SK-N-SH (cell line): ENCODE measurements at regions of chr20 and their contacts with region 1.

Region 1: GRCh38 chr20:9978397-9979004 is 56.3 kb upstream of the ANKEF1 start:
- DNase-seq: peak; percentile 66
- H3K4me3 ChIP-seq: peak overlapping the region; percentile 6 to 16; a peak in 2 of 4 replicates
- H3K27ac ChIP-seq: no peak overlapping the region; a peak in 1 of 4 replicates
- H3K4me1 ChIP-seq: no peaks in the 10 kb centered on the region; a peak in 1 of 4 replicates
- H3K27me3 ChIP-seq: no peaks in the 10 kb centered on the region
- CTCF ChIP-seq: peak; percentile 94
- EP300 ChIP-seq: no peak
- RAD21 ChIP-seq: peak; percentile 99

Region 2: DNA sequence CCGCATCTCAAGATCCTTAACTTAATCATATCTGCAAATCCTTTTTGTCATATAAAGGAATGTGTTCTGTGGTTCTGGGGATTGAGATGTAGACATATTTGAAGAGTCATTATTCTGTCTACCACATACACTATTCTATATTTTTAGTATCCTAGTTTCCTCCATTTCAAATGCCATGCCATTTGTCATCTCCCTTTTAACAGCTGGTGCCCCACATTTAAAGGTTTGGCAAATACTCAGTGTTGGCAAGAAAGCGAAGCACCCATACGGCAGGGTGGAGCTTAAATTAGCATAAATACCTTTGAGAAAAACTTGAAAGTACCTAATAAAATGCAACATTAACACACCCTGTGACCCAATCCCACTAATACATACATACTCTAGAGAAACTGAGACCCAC is 171.4 kb before region 1 on chr20:
- CTCF ChIA-PET with region 1: no interaction called
- POLR2A ChIA-PET with region 1: no interaction called
- DNase-seq: no peak
- H3K4me3 ChIP-seq: no peak overlapping the region
- H3K27ac ChIP-seq: no peak overlapping the region
- H3K4me1 ChIP-seq: no peaks in the 10 kb centered on the region
- H3K27me3 ChIP-seq: no peaks in the 10 kb centered on the region
- CTCF ChIP-seq: no peak
- EP300 ChIP-seq: no peak
- RAD21 ChIP-seq: no peak

Region 3: DNA sequence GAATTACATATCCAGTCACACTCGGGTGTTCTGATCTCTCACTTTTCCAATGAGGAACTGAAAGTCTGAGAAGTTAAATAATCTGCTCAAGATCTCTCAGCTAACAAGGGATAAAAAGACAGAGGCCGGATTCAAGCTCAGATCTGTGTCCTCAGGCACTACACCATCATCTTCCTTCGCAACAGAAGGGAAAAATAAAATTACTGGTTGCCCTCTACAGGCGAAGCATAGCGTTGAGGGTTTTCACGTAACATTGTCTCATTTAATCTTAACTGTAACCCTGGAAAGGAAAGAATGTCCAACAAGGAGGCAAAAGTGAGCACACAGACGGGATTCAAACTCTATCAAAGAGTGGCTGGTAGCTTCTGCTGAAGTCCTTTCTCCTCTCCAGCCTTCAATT is 11.5 kb before region 1 on chr20:
- CTCF ChIA-PET with region 1: interaction called, 36 read pairs
- POLR2A ChIA-PET with region 1: no interaction called
- DNase-seq: peak; percentile 30
- H3K4me3 ChIP-seq: no peak overlapping the region
- H3K27ac ChIP-seq: no peak overlapping the region
- H3K4me1 ChIP-seq: peaks cover 0 to 6% of the 10 kb centered on the region in 2 experiments; a peak in 1 of 4 replicates
- H3K27me3 ChIP-seq: no peaks in the 10 kb centered on the region; the same call in 1 of the 2 replicates
- CTCF ChIP-seq: peak; percentile 41
- EP300 ChIP-seq: no peak
- RAD21 ChIP-seq: peak; percentile 28

Region 4: DNA sequence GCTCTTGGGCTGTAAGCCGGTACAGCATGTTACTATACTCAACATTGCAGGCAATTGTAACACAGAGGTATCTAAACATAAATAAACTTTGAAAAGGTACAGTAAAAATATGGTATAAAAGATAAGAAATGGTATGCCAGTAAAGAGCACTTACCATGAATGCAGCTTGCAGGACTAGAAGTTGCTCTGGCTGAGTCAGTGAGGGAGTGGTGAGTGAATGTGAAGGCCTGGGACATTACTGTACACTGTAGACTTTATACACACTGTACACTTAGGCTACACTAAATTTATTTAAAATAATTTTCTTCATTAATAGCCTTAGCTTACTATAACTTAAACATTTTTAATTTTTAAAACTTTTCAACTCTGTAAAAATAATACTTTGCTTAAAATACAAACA is 18.4 kb after region 1 on chr20:
- CTCF ChIA-PET with region 1: interaction called, 14 read pairs
- POLR2A ChIA-PET with region 1: no interaction called
- DNase-seq: no peak
- H3K4me3 ChIP-seq: no peak overlapping the region
- H3K27ac ChIP-seq: no peak overlapping the region
- H3K4me1 ChIP-seq: no peaks in the 10 kb centered on the region; a peak in 1 of 4 replicates
- H3K27me3 ChIP-seq: no peaks in the 10 kb centered on the region
- CTCF ChIP-seq: no peak
- EP300 ChIP-seq: no peak
- RAD21 ChIP-seq: no peak

Region 5: GRCh38 chr20:10219452-10219791 is 240.9 kb after region 1 on chr20:
- CTCF ChIA-PET with region 1: interaction called, 20 read pairs
- POLR2A ChIA-PET with region 1: no interaction called
- DNase-seq: peak; percentile 84
- H3K4me3 ChIP-seq: peak overlapping the region; percentile 68 to 69
- H3K27ac ChIP-seq: peak overlapping the region; percentile 48 to 87; a peak in 3 of 4 replicates
- H3K4me1 ChIP-seq: peaks cover 0 to 20% of the 10 kb centered on the region in 2 experiments; a peak in 2 of 4 replicates
- H3K27me3 ChIP-seq: no peaks in the 10 kb centered on the region
- CTCF ChIP-seq: peak; percentile 16; the same call in 1 of the 2 replicates
- EP300 ChIP-seq: peak in 1 of 2 experiments; percentile 49; a peak in 1 of 4 replicates
- RAD21 ChIP-seq: no peak

Region 6: DNA sequence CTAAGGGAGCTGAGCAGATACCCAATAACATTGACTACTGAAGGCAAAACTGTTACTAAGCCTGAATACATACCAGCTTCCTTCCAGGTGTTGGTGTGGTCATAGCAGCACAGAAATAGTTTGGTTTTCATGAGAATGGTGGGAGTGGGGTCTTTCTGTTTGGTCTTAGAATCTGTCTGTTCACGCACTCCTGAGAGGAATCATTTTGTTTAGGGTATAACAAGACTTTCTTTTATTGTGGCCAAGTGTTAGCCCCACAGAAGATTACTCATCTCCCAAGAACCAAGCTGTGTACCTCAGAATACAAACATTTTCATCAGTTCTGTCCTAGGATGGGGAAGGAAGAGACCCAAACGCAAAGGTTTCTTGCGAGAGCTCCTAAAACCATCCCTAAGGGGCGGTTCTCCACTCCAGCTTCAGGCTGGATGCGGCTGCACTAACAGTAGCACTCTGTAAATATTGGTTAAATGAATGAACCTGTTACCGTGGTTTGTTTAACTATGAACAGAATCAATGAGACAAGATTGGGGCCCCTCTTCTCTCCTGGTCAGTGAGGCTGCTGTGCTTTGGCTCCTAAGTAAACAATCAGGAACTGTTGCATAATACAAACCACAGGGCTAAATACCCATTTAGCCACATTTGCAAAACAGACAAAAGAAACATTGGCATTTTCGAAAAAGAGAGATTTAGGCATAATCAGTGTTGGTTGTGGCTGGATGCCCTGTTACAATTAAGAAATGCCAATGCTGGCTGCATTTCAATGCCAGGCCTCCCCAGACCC is 285.1 kb after region 1 on chr20:
- CTCF ChIA-PET with region 1: interaction called, 12 read pairs
- POLR2A ChIA-PET with region 1: no interaction called
- DNase-seq: no peak
- H3K4me3 ChIP-seq: no peak overlapping the region
- H3K27ac ChIP-seq: no peak overlapping the region
- H3K4me1 ChIP-seq: no peaks in the 10 kb centered on the region
- H3K27me3 ChIP-seq: no peaks in the 10 kb centered on the region
- CTCF ChIP-seq: no peak
- EP300 ChIP-seq: no peak
- RAD21 ChIP-seq: no peak

Region 7: DNA sequence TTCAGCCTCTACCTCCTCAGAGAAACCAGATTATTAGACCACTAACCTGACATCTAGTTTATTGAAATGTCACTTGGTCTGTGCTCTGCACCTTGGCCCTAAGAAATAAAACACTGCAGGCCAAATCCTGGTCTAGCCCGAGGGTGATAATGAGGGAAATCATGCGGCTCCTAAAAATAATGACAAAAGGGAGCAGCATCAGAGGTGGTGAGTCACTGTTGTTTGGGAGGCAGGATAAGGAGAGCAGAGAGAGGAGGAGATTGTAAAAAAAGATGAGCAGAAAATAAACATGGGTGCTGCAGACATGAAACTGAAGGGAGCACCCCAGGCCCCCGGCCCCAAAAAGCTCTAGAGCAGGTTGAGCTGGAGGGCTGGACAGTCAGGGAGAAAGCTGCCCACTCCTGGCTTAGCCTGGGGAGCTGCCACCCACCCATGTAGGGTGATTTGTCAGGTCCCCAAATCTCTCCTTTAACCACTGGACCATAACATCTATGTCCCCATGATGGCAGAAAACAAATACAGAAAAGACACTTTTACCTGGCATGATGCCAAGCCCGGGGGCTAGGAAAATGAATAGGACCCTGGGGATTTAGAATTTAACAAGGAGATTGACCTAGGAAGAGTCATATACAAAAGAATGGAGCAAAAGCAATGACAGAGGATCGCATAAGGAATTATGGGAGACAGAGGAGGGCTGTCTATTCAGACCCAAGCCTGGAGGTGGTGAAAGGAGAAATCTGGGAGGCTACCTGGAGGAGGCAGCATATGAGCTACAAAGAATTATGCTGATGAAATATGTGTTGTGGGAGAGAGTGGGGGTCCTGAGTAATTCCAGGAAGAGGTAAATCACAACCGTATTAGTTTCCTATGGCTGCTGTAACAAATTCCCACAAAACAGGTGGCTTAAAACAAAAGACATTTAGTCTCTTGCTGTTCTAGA is 343.8 kb after region 1 on chr20:
- CTCF ChIA-PET with region 1: no interaction called
- POLR2A ChIA-PET with region 1: no interaction called
- DNase-seq: peak; percentile 9
- H3K4me3 ChIP-seq: no peak overlapping the region
- H3K27ac ChIP-seq: no peak overlapping the region
- H3K4me1 ChIP-seq: peaks cover 0 to 5% of the 10 kb centered on the region in 2 experiments; a peak in 1 of 4 replicates
- H3K27me3 ChIP-seq: no peaks in the 10 kb centered on the region
- CTCF ChIP-seq: no peak
- EP300 ChIP-seq: no peak
- RAD21 ChIP-seq: no peak

Region 8: DNA sequence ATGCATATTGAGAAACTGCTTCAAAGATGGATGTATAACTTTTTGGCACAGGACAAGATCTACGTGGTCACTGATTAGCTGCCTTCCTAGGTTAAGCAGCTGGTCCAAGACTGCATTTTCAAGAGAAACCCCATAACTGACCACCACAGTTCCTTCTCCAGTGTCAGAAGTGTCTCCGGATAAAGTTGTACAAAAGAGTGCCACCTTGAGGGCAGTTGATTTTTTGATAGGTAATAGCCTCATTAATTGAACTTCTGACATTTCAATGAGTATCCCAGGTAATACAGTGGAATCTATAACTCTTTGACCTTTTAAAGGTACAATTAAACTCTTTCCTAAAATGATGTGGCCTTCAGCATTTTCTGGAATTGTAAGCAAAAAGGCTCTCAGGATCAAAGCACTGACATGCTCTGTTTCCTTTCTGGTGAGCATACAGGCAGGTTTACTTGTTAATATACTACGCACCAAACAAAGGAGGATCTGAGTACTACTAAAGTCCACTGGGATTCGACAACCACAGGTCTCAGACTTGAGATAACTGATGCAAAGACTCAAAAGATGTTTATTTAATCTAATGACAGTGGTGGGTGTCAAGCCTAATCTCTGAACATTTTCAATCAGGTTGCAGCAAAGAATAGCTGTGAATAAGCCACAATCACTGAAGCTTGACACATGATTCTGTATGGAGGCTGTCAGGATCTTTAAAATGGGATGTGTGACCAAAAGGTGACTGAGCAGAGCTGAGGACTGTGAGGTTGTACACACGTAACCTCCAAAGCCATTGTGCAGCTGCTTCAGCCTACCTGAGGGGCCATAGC is 434.3 kb after region 1 on chr20:
- CTCF ChIA-PET with region 1: interaction called, 17 read pairs
- POLR2A ChIA-PET with region 1: no interaction called
- DNase-seq: no peak
- H3K4me3 ChIP-seq: no peak overlapping the region
- H3K27ac ChIP-seq: no peak overlapping the region
- H3K4me1 ChIP-seq: peaks cover 0 to 12% of the 10 kb centered on the region in 2 experiments; a peak in 2 of 4 replicates
- H3K27me3 ChIP-seq: no peaks in the 10 kb centered on the region
- CTCF ChIP-seq: peak; percentile 55
- EP300 ChIP-seq: no peak
- RAD21 ChIP-seq: peak; percentile 64

Region 9: GRCh38 chr20:10434832-10435812 is 456.6 kb after region 1 on chr20 and contains the start of gene SLX4IP:
- CTCF ChIA-PET with region 1: interaction called, 92 read pairs
- POLR2A ChIA-PET with region 1: interaction called, 4 read pairs
- DNase-seq: peak; percentile 75
- H3K4me3 ChIP-seq: peak within 1 kb of the TSS; percentile 93 to 99
- H3K27ac ChIP-seq: peak within 1 kb of the TSS; percentile 93 to 98
- H3K4me1 ChIP-seq: peaks cover 8 to 17% of the 10 kb centered on the region in 2 experiments; a peak in 3 of 4 replicates
- H3K27me3 ChIP-seq: no peaks in the 10 kb centered on the region
- CTCF ChIP-seq: no peak
- EP300 ChIP-seq: no peak; a peak in 1 of 4 replicates
- RAD21 ChIP-seq: no peak
- polyA plus RNA-seq, gene SLX4IP: 1.3 and 1.6 TPM in 2 replicates